ENCODE measurements at regions of chr21 and their contacts with region 1.

Region 1: DNA sequence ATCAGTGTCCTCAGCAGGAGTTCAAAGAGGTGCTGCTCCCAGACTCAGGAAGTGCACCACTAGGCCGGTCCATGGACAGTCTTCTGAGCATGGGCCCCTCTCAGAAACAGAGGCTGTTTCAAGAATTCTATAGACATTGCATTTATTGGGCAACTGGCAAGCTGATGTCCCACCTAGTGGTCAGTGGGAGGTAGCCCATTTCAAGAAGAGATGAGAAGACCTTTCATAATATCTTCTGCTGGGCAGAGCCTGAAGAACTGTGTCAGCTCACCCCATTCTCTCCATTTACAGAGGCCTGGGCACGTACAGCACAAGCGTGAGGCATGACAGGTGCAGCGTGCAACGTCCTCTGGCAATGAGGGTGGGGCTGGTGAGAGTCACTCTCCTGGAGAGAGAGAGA is 216.0 kb downstream of the DYRK1A start:
- DNase-seq: no peak
- H3K4me3 ChIP-seq: no peak overlapping the region
- H3K27me3 ChIP-seq: peaks cover 2% of the 10 kb centered on the region; the same call in 1 of the 2 replicates
- CTCF ChIP-seq: peak; percentile 69

Region 2: GRCh38 chr21:37568415-37568814 is 14.2 kb before region 1 on chr21:
- CTCF ChIA-PET with region 1: interaction called, 11 read pairs
- POLR2A ChIA-PET with region 1: no interaction called
- DNase-seq: no peak
- H3K4me3 ChIP-seq: no peak overlapping the region
- H3K27me3 ChIP-seq: no peaks in the 10 kb centered on the region
- CTCF ChIP-seq: no peak

Measured in BJ (cell line).